Motor neuron (in vitro differentiated cells): ENCODE measurements at regions of chr9 and their contacts with region 1.

Region 1: DNA sequence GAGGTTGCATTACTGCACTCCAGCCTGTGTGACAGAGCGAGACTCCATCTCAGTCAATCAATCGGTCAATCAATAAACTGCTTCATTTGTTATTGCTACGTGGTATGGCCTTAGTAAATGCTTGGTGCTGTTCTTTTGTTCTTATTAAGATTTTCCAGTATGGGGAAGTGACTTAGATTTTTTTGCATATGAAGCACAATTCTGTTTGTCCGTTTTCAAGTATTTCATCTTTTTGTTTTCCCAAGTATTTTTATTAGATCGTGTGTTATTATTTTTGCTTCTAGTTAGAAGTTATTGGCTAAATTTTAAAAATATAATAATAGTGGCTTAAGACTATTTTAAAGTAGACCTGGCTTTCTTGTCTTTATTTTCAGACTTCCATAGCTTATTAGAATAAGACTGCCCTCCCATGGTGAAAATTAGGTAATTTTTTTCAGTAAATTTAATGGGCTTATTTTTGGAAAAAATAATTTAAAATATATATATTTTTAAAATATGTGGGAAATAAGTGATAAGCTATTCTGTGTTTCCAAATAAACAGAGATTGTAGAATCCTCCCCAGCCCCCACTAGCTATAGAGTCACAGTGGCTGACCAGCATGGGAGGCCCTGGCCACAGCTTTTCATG is 14.7 kb upstream of the OMD start:
- ATAC-seq: no peak
- H3K4me3 ChIP-seq: no peak overlapping the region
- H3K27ac ChIP-seq: no peak overlapping the region
- H3K4me1 ChIP-seq: no peaks in the 10 kb centered on the region

Region 2: GRCh38 chr9:92191801-92192200 is 247.2 kb before region 1 on chr9:
- in situ Hi-C with region 1: no loop called
- ATAC-seq: peak in 3 of 8 experiments; percentile 96 to 98 (median 98)
- H3K4me3 ChIP-seq: no peak overlapping the region
- H3K27ac ChIP-seq: no peak overlapping the region
- H3K4me1 ChIP-seq: peaks cover 5% of the 10 kb centered on the region in 2 donors

Region 3: DNA sequence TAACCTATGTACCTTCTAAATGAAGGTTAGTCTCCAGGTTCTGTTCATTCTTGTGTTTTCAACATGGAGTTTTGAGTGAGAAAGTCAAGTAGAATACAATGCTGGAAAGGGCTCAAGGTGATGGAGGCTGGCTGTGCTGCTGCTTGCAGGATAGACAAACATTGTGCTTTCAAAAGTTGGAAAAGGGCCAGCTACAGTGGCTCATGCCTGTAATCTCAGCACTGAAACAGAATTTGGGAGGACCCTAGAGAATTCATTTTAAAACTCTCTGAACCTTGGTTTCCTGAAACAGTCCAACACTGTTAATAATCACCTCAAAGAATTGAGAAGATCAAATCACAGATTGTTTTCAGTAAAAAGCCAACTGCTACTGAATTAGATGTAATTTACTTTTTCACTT is 130.1 kb before region 1 on chr9:
- in situ Hi-C with region 1: no loop called
- ATAC-seq: no peak
- H3K4me3 ChIP-seq: no peak overlapping the region
- H3K27ac ChIP-seq: no peak overlapping the region
- H3K4me1 ChIP-seq: no peaks in the 10 kb centered on the region

Region 4: GRCh38 chr9:92325269-92325990 is 113.6 kb before region 1 on chr9 and contains the starts of genes CENPP and NOL8:
- in situ Hi-C with region 1: loop called in 3 of 9 experiments (anchors 10 to 25 kb)
- ATAC-seq: peak; percentile 87 to 96 (median 95)
- H3K4me3 ChIP-seq: peak within 1 kb of the TSS; percentile 92 to 96 (median 94)
- H3K27ac ChIP-seq: peak within 1 kb of the TSS; percentile 98 to 100
- H3K4me1 ChIP-seq: peaks cover 6 to 7% of the 10 kb centered on the region in 2 donors
- total RNA-seq, gene CENPP: 1.7 to 22.3 (median 5.0) TPM
- total RNA-seq, gene NOL8: 17.2 to 77.0 (median 29.5) TPM

Region 5: GRCh38 chr9:92332577-92333281 is 106.3 kb before region 1 on chr9:
- in situ Hi-C with region 1: loop called in 3 of 9 experiments (anchors 10 to 25 kb)
- ATAC-seq: no peak
- H3K4me3 ChIP-seq: no peak overlapping the region
- H3K27ac ChIP-seq: no peak overlapping the region
- H3K4me1 ChIP-seq: no peaks in the 10 kb centered on the region

Region 6: DNA sequence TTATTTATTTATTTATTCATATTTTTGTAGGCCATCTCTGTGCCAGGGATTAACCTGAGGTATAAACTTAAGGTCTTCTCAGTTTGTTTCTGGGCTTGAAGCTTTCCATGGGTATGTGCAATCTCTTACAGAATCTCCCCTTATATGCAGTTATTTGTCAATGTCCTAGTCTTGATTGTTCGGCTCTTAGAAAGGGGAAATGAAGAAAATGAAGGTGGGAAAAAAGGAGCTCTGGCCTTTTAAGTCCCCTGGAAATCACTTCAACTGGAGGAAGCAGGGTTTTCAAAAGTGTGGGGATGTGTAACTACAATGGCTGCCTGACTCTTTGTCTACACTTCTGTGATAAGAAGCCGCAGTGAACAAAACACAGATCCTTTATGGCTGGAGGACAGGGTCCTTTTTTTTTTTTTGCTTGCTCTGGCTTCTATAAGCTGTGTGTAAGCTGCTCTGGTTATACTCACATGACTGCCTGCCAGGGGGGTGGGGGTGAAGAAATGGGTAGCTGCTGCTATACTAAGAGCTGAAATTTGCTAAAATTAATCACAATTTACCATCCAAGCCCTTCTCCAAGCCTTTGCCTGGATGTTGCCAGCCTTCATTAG is 79.5 kb before region 1 on chr9:
- in situ Hi-C with region 1: no loop called
- ATAC-seq: peak in 5 of 8 experiments; percentile 57 to 86 (median 74)
- H3K4me3 ChIP-seq: no peak overlapping the region
- H3K27ac ChIP-seq: no peak overlapping the region
- H3K4me1 ChIP-seq: no peaks in the 10 kb centered on the region

Region 7: DNA sequence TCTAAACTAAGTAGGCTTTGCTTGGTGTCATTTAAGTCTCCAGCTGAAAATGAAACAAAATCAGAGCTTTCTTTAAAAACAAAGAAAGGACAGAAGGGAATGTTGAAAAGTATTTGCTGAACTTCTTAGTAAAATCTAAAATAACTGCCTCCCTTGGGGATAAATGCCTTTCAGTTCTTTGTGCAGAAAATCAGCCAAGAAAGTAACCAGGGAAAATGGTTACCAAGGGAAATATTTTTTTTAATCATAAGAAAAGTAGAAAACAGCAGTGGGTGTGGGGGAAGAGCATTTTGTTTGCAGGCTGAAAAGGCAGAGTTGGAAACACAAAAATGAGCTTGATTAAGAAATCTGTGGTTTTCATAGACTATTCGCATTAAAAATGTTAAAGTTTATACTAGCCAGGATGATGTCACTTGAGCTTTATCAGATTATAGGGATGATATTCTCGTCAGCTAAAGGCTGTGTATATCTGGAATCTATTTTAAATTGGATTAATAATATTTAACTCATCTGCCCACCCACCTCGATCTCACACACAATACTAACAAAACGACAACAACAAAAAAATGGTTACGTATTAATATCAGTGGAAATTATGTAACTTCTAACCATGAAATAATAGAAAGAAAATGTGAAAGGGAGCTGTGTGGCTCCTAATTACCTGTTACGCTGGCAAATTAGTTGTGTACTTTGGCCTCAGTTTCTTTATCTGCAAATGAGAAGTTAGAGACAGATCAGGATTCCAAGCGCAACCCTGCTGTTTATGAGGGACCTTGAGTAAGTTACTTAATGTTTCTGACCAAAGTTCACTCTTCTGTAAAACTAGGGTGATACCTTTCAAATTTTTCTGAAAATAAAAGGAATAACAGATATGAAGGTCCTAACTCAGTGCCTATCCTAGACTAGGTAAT is 97.2 kb after region 1 on chr9 and contains the start of gene ECM2:
- in situ Hi-C with region 1: no loop called
- ATAC-seq: peak in 3 of 8 experiments; percentile 29 to 45 (median 43)
- H3K4me3 ChIP-seq: no peak within 1 kb of the TSS
- H3K27ac ChIP-seq: no peak within 1 kb of the TSS
- H3K4me1 ChIP-seq: no peaks in the 10 kb centered on the region
- total RNA-seq, gene ECM2: 0.16 to 20.3 (median 4.3) TPM